Prostate gland (tissue), 2 donors: ENCODE measurements at regions of chr5 and their contacts with region 1.

Region 1: DNA sequence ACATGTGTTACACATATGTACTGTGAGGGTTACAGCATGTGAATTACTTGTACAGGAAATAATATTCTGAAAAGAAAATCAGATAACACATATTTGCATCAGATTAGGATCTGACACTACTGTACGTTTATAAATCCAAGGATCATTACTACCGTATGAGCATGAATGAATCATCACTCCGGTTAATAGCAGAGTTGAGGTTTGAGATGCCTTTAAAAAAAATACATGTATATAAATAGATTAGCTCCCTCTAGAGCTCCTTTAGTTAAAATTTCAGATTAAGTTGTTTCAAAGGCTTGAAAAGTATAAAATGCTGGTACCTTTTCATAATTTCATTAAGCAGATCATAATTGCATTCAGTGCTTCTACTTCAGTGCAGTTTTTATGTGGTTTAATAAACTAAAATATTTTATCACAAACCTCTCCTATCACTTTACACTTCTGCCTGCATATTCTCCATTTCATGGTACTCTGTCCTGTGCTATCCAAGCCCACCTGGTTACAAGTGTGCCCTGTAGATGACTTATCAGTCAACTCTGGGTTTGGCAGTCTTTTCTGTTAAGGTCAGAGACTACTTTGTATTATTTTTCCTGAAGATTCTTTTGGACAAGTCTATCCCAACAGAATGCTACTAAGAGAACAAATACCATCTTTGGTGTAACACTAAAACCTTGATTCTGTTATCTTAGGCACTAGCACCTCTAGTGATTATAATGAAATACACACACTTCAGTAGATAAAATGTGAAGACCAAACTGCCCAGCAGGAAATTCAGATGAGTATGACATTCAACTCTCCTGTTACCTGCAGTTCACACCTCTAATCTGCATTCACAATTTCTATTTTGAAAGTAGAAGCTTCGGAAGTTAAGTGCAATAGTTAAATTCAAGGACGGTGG is 48.0 kb upstream of the POU5F2 start:
- DNase-seq: no peak
- H3K4me3 ChIP-seq: no peak overlapping the region
- H3K27ac ChIP-seq: no peak overlapping the region
- H3K4me1 ChIP-seq: no peaks in the 10 kb centered on the region
- H3K27me3 ChIP-seq: no peaks in the 10 kb centered on the region
- CTCF ChIP-seq: no peak
- POLR2A ChIP-seq: no peak

Region 2: DNA sequence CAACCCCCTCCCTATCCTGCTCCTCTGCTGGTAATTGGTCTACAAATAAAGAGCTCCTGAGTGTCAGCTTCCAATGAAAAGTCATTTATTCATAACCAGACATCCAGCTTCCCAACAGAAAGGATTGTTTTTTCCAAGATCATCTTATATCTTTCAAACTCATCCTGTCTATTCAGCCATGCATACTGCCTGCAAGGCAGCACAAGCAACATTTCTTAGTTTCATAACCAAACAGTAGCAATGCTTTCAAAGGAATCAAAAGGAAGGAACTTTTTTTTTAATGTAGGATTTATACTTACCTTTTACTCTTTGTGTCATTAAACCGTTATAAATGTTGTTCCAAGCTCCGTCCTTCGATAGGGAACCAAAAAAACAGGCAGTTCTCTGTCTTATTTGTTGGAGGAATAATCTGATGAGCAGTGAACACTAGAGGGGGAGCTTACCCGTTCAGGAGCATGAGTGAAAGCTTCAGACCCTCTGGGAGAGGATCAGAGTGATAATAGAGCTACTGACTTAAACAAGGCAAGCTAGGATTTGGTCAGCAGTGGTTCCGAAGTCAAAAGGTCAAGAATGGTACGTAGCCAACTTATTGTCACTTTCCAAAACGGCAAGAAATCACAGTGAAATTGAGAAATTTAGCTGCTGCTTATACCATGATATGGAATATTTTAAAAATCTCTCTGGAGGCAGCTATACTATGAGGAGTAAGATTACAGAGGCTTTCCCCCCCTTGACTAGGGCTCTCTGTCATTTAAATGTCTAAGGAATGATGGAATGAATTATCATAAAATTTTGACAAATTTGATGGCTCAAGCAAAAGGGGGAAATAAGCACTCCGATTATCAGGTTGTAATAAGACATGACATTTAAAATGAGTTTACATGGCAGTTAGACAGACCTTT is 1101.3 kb before region 1 on chr5:
- intact Hi-C with region 1: loop called (anchors 10 kb)
- DNase-seq: no peak
- H3K4me3 ChIP-seq: no peak overlapping the region
- H3K27ac ChIP-seq: no peak overlapping the region
- H3K4me1 ChIP-seq: no peaks in the 10 kb centered on the region
- H3K27me3 ChIP-seq: no peaks in the 10 kb centered on the region
- CTCF ChIP-seq: peak in 2 of 4 experiments; percentile 11 to 12
- POLR2A ChIP-seq: no peak